CD8-positive, alpha-beta memory T cell (primary cell): ENCODE measurements at regions of chr6 and their contacts with region 1.

Region 1: DNA sequence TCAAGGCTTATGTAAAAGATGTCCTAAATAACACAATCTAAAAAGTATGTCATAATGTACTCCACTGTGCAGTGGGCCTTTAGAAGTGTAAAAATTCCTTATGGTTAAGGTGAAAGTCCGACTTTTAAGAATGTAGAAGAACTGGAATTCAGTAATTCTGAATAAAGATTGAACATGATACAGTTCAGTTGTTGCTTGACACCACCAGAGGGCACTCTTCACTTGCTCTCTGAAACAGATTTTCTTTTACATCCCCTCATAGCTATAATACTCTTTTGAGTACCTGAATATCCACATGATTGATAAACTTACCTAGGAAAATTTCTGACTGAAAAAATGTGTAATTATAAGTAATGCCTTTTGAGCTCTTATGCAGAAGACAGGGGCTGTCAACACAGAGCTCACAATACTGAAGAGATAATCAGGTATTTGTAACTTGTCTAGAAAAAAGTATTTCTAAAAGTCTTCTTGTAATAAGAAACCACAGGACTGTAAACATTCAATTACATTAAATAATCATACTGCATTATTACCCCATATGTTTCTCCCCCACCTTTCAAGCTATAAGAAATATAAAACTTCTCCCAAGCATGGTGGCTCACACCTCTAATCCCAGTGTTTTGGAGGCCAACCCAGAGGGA is 92.1 kb downstream of the POPDC3 start:
- DNase-seq: peak in 2 of 5 donors; percentile 27 to 37
- H3K4me3 ChIP-seq: no peak overlapping the region
- H3K4me3 Mint-ChIP-seq: no peak overlapping the region
- H3K27ac ChIP-seq: no peak overlapping the region
- H3K27ac Mint-ChIP-seq: no peak overlapping the region
- H3K4me1 ChIP-seq: no peaks in the 10 kb centered on the region
- H3K4me1 Mint-ChIP-seq: no peaks in the 10 kb centered on the region
- H3K27me3 ChIP-seq: no peaks in the 10 kb centered on the region
- H3K27me3 Mint-ChIP-seq: peaks cover 2 to 4% of the 10 kb centered on the region in 2 donors

Region 2: DNA sequence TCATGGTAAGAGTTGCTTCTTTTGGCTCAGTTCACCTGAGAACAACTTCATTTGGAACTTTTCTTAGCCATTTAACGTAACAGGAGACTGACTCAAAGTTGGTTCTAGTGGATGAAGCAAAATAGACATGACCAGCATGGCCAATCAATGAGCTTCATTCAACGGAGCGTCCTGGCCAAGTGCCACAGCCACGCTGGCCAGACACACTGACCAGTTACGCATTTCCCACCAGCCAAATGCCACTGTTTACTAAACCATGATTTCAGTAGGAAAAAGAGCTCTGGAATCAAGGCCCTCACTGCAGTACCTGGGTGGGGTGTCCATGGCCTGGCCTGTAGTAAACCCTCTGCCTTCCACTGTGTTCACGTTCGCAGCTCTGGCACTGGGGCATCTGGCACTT is 11.7 kb after region 1 on chr6:
- CTCF ChIA-PET with region 1: interaction called, 16 read pairs
- POLR2A ChIA-PET with region 1: no interaction called
- DNase-seq: no peak
- H3K4me3 ChIP-seq: no peak overlapping the region
- H3K4me3 Mint-ChIP-seq: no peak overlapping the region
- H3K27ac ChIP-seq: no peak overlapping the region
- H3K27ac Mint-ChIP-seq: no peak overlapping the region
- H3K4me1 ChIP-seq: no peaks in the 10 kb centered on the region
- H3K4me1 Mint-ChIP-seq: no peaks in the 10 kb centered on the region
- H3K27me3 ChIP-seq: no peaks in the 10 kb centered on the region
- H3K27me3 Mint-ChIP-seq: peaks cover 0 to 2% of the 10 kb centered on the region in 2 donors

Region 3: DNA sequence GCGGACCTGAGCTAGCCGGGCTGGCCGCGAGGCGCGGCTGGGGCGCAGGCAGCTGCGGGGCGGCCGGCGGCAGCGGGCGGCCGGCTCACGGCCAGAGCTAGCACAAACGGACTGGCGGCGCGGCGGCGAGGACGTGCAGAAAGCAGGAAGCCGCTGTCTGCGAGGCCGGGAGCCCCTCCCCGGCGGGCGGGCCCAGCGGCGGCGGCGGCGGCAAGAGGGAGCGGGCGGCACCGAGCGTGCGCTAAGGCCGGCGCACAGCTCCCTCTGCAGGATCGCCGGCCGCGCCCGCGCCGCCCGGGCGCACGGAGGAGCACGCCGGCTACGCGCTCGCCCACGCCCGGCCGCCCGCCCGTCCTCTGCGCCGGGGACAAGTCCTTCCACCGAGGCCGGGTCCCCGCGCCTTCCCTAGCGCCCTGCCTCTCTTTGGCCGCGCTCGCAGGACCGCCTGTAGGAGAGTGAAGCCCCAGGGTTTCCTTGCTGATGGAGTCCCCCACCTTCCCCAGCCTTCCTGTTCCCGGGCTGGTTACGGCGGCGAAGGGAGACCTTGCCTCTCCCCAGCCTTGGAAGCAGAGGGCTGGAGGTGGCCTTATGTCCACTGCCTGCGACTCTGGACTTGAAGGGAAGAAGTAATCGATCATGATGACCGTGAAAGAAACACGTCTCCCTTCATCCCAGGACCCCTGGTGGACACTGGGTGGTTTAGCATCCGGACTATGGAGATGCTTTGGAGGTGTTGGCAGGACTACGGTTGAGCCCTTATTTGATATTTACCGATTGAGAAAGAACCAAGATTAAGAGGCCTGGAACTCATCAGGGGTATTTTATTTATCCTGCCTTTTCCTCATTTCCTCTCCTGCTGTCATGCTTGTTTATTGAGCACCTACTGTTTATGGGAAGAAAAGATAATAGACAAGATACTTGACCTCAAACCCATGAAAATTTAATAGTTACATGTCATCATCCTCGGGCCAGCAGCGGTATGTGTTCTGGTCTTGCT is 315.5 kb after region 1 on chr6 and contains the start of gene PREP:
- CTCF ChIA-PET with region 1: interaction called, 23 read pairs
- POLR2A ChIA-PET with region 1: no interaction called
- DNase-seq: peak; percentile 72 to 84 (median 81)
- H3K4me3 ChIP-seq: peak within 1 kb of the TSS; percentile 91
- H3K4me3 Mint-ChIP-seq: peak within 1 kb of the TSS; percentile 90 to 98 (median 92)
- H3K27ac ChIP-seq: peak within 1 kb of the TSS; percentile 53
- H3K27ac Mint-ChIP-seq: peak within 1 kb of the TSS; percentile 48 to 98 (median 82)
- H3K4me1 ChIP-seq: peaks cover 38% of the 10 kb centered on the region
- H3K4me1 Mint-ChIP-seq: peaks cover 50 to 53% (median 53%) of the 10 kb centered on the region in 3 donors
- H3K27me3 ChIP-seq: no peaks in the 10 kb centered on the region
- H3K27me3 Mint-ChIP-seq: peaks cover 8 to 13% of the 10 kb centered on the region in 2 donors
- total RNA-seq, gene PREP: 49.9 to 50.0 TPM

Region 4: DNA sequence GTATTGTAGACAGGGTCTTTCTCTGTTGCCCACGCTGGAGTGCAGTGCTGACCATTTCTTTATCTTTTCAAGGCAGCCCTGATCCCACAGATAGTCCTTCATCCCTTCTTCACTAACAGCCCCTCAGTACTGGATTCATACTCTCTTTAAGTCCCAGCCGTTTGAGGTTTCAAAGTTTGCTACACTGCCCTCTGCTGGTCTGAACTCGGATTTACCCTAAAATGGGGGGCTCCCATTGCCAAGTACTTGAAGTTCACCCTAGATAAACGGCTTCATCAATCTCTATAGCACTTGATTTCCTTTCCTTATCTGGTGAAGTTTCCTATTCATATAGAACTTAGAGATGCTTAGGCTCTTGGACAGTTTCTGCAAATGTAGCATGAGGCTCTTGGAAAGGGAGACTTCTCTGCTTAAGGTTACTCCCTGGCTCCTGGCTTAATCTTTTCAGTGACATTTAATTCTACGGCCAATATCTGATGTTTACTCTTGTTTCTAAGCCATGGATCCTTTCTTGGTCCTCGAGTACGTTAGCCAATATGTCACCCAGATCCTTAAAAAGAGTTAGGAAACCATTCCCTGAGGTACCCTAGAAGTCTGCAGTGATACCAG is 336.6 kb after region 1 on chr6:
- CTCF ChIA-PET with region 1: interaction called, 26 read pairs
- POLR2A ChIA-PET with region 1: no interaction called
- DNase-seq: peak; percentile 40 to 73 (median 49)
- H3K4me3 ChIP-seq: no peak overlapping the region
- H3K4me3 Mint-ChIP-seq: no peak overlapping the region
- H3K27ac ChIP-seq: no peak overlapping the region
- H3K27ac Mint-ChIP-seq: peak overlapping the region in 1 of 8 donors; percentile 49
- H3K4me1 ChIP-seq: no peaks in the 10 kb centered on the region
- H3K4me1 Mint-ChIP-seq: peaks cover 0 to 6% (median 4%) of the 10 kb centered on the region in 3 donors
- H3K27me3 ChIP-seq: no peaks in the 10 kb centered on the region
- H3K27me3 Mint-ChIP-seq: peaks cover 0 to under 1% of the 10 kb centered on the region in 2 donors

Region 5: DNA sequence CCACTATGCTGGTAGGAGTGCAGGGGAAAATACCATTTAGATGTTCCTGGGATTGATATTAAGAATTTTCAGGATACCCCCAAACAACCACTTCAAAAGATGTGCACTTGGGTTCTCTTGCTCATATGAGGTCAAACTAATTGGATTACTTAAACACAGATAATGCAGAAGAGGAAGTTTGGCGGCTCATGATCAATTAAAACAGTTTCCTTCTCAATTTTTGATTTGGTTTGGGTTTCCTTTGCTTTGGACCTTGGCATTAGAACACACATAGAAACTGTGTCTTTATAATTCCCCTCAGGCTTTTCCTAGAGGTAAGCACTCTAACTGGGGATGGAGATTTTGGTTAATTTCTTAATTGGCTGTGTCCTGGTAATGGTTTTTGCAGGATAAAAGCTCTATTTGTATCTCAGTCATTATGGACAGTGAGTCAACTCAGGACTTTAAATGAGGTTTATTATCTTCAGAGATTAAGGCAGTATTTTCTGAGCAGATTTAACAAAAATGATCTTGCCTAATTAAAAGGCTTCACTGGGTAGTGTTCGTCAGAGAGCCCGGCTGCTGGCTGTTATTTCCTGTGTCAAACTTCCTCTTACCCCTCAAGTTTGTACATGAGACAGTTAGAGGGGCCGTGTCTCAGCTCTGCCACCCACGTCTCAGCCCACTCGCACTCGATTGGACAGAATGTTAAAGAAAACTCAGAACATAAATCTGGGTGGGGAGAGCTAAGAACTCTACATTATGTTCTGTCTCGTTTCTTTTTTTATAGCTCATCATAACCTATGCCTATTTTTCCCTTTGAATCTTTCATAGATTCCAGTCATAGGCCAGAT is 365.4 kb after region 1 on chr6:
- CTCF ChIA-PET with region 1: no interaction called
- POLR2A ChIA-PET with region 1: no interaction called
- DNase-seq: peak; percentile 58 to 81 (median 72)
- H3K4me3 ChIP-seq: peak overlapping the region; percentile 30
- H3K4me3 Mint-ChIP-seq: peak overlapping the region; percentile 80 to 92 (median 86)
- H3K27ac ChIP-seq: peak overlapping the region; percentile 64
- H3K27ac Mint-ChIP-seq: peak overlapping the region; percentile 85 to 97 (median 94)
- H3K4me1 ChIP-seq: peaks cover 19% of the 10 kb centered on the region
- H3K4me1 Mint-ChIP-seq: peaks cover 54 to 65% (median 59%) of the 10 kb centered on the region in 3 donors
- H3K27me3 ChIP-seq: no peaks in the 10 kb centered on the region
- H3K27me3 Mint-ChIP-seq: peaks cover 0 to 3% of the 10 kb centered on the region in 2 donors